WTC11 (cell line): ENCODE measurements at regions of chr2 and their contacts with region 1.

Region 1: DNA sequence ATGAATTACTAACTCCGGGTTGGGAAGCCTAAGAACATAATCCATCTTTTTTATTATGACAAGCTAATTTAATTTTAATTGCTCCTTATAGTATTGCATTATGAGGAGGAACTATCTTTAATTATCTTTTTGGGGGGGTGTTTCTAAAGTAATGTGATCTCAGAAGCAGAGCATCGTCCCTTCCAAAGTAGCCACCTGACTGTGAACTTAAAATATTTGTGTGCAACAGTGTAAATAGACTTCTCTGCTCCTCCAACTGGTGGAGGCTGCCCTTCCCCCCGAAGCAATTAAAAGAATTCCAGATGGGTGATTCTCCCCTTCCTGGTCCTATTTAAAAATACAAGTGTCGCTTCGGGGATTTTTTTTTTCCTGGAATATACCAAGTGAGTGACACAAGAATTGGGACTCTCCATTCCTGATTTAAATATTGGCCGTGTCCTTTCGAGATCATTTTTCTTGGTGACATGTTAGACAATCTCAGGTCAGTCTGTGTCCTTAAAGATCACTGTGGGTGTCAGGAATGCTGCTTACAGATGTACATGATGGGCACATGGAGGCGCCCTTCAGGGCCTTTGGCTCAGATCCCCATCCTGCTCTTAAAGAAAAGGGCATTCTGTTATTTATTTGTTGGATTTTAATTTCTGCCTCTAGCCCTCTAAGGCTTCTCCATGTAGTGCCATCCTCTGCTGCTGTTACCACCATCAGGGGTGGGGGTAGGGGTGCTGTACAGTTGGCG is 55.8 kb downstream of the TCF7L1 start:
- DNase-seq: no peak
- ATAC-seq: 0 out of 2 replicates have a peak, but pooled peaks have one; percentile 7
- H3K4me3 Mint-ChIP-seq: no peak overlapping the region
- H3K27ac Mint-ChIP-seq: peak overlapping the region; percentile 42; the same call in 1 of the 2 replicates
- H3K4me1 Mint-ChIP-seq: peaks cover 62% of the 10 kb centered on the region
- H3K27me3 Mint-ChIP-seq: no peaks in the 10 kb centered on the region
- CTCF ChIP-seq: no peak

Region 2: GRCh38 chr2:85066874-85067351 is 122.1 kb before region 1 on chr2:
- CTCF ChIA-PET with region 1: interaction called, 20 read pairs
- POLR2A ChIA-PET with region 1: no interaction called
- DNase-seq: peak; percentile 93
- ATAC-seq: peak; percentile 86
- H3K4me3 Mint-ChIP-seq: peak overlapping the region; percentile 55
- H3K27ac Mint-ChIP-seq: no peak overlapping the region
- H3K4me1 Mint-ChIP-seq: peaks cover 25% of the 10 kb centered on the region
- H3K27me3 Mint-ChIP-seq: peaks cover 30% of the 10 kb centered on the region
- CTCF ChIP-seq: peak; percentile 66

Region 3: GRCh38 chr2:85175369-85176299 is 13.4 kb before region 1 on chr2:
- CTCF ChIA-PET with region 1: interaction called, 17 read pairs
- POLR2A ChIA-PET with region 1: no interaction called
- DNase-seq: no peak
- ATAC-seq: no peak
- H3K4me3 Mint-ChIP-seq: no peak overlapping the region
- H3K27ac Mint-ChIP-seq: peak overlapping the region; percentile 82
- H3K4me1 Mint-ChIP-seq: peaks cover 90% of the 10 kb centered on the region
- H3K27me3 Mint-ChIP-seq: no peaks in the 10 kb centered on the region
- CTCF ChIP-seq: no peak

Region 4: DNA sequence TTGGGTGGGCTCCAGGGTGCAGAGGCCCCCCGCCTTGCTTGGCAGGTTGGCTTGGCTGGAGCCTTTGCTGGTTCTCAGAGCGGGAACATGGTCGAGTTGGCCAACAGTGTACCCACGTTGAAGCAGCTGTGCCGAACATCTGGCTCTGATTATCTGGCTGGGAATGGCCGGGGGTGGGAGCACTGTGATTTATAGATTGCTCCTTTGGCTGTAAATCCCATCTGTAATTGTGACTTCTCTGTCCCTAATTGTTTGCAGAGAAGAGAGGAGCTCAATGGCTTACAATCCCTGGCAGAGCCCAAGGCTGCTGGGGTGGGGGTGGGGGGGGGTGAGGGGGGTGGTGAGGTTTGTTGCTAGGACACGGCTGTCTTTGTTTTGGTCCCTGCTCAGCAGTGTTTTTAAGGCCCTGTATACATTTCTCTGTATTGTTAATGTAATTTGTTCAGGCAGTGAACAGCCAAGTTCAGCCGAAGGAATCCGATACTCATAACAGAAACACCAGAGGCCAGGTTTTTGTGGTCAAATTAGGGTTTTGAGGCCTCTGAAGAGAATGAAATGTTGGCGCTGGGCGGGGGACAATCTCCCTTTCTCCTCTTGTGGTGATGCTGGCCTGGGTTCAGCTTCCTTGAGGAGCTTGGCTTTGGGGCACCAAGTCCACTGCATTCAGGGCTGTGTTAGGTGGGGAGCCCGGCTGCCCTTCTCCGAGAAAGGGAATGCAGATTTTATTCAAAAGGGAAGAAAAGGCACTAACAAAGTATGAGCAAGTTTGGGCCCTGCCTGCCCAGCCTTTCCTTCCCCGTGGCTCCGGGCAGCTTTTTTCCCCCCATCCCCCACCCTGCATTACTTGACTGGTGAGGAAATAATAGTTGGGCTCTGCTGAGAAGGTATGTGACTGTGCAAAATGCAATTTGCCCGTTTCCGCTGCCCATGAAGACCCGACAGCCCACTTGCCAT is 26.7 kb after region 1 on chr2:
- CTCF ChIA-PET with region 1: interaction called, 24 read pairs
- POLR2A ChIA-PET with region 1: interaction called, 7 read pairs
- DNase-seq: no peak
- ATAC-seq: peak; percentile 21
- H3K4me3 Mint-ChIP-seq: peak overlapping the region; percentile 48
- H3K27ac Mint-ChIP-seq: peak overlapping the region; percentile 93
- H3K4me1 Mint-ChIP-seq: peaks cover 75% of the 10 kb centered on the region
- H3K27me3 Mint-ChIP-seq: no peaks in the 10 kb centered on the region
- CTCF ChIP-seq: no peak

Region 5: DNA sequence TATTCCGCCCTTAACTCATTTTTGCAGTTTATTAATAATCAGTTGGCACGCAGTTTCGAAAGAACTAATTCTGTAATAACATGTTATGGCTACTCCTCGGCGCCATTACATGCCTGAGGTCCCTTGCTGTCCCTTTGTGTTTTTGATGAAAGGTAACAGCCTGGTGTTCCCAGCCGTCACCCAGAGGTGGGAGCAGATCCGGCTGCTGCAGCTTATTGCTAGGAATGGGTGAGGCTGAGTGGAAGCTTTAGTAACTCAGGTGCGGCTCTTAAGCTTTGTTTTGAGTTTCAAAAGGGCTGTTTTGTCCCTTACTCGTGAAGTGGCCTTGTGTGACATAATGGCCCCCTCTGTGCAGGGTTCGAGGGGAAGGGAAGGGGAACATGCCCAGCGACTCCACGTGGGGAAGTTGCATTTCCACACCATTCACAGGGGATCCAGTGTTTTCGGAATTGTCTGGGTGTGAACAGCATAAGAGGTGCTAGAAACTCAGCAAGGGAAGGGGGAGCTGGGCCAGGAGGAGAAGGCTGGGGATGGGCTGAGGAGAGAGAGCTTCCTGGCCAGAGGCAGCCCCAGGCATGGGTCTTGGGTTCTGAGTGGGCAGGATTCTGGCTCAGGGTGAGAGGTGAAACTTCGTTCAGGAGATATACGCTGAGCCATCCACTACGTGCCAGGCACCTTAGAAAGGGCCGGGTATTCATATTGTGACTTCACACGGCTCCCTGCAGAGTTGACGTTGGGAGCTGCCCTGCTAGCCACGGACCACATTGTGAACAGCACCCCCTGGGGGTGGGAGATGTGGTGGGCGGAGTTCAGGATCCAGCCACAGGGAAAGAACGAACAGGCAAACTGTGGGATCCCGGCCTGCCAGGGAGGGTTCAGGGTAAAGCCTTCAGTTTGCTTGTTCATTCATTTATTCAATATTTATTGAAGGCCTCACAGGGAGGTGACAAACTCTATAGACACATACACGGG is 54.4 kb after region 1 on chr2:
- CTCF ChIA-PET with region 1: interaction called, 14 read pairs
- POLR2A ChIA-PET with region 1: interaction called, 3 read pairs
- DNase-seq: peak; percentile 77
- ATAC-seq: peak; percentile 56
- H3K4me3 Mint-ChIP-seq: no peak overlapping the region
- H3K27ac Mint-ChIP-seq: peak overlapping the region; percentile 67
- H3K4me1 Mint-ChIP-seq: peaks cover 87% of the 10 kb centered on the region
- H3K27me3 Mint-ChIP-seq: no peaks in the 10 kb centered on the region
- CTCF ChIP-seq: peak; percentile 53; the same call in 1 of the 2 replicates

Region 6: GRCh38 chr2:85288244-85288725 is 99.3 kb after region 1 on chr2:
- CTCF ChIA-PET with region 1: interaction called, 28 read pairs
- POLR2A ChIA-PET with region 1: no interaction called
- DNase-seq: no peak
- ATAC-seq: peak; percentile 39
- H3K4me3 Mint-ChIP-seq: no peak overlapping the region
- H3K27ac Mint-ChIP-seq: peak overlapping the region; percentile 74; the same call in 1 of the 2 replicates
- H3K4me1 Mint-ChIP-seq: peaks cover 39% of the 10 kb centered on the region
- H3K27me3 Mint-ChIP-seq: no peaks in the 10 kb centered on the region
- CTCF ChIP-seq: no peak